ENCODE measurements at regions of chr19 and their contacts with region 1.

Region 1: DNA sequence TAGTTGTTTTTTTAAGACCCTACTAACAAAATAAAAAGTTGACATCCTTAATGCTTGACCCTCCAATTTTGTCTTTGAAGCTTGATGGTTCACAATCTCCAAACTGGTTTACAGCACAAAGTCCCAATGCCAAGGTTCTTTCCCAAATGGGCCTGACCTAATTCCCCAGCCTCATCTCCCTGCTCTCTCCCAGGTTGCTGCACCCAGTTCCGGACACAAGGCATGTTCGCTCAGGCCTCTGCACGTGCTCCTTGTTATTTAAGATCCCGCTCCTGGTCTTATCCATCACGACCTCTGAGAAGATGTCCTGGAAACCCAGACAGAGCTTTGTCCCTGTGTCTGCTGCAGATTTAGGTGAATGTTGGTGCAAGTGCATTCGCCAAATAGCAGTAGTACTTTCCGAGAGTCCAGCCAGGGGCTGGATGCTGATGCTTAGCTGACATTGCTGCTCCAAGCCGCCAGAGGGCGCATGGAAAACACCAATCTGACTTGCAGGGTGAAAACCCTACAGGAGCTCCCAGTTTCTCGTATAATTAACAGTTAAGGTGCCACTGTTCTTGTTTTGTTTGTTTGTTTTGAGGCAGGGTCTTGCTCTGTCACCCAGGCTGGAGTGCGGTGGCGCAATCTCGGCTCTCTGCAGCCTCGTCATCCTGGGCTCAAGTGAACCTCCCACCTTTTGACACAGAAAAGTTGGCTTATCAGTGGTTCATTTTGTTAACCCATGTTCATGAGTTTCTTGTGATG is 18.5 kb downstream of the LYPD3 start:
- DNase-seq: peak; percentile 61 to 78
- H3K4me3 ChIP-seq: no peak overlapping the region
- H3K4me1 ChIP-seq: peaks cover 2% of the 10 kb centered on the region; the same call in 1 of the 2 replicates
- H3K27me3 ChIP-seq: no peaks in the 10 kb centered on the region

Region 2: DNA sequence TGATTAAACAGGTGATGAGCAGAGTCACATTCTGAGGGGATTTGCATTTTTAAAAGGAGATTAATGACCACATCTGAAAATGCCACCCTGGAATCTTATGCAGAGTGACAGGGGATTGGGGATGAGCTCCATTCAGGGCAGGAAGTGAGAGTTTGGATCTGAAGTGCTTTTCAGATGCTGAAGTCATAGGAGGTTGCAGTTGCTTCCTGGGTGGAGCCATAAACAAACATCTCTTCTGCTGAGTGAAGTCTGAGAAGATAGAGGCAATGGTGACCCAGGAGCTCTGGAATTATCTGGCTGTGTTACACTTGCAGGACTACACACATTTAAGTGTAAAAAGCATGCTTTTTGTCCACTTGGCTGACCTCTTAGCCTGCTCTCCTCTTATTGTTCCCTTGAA is 630.0 kb before region 1 on chr19:
- in situ Hi-C with region 1: no loop called
- DNase-seq: no peak
- H3K4me3 ChIP-seq: no peak overlapping the region
- H3K4me1 ChIP-seq: no peaks in the 10 kb centered on the region
- H3K27me3 ChIP-seq: no peaks in the 10 kb centered on the region

Region 3: GRCh38 chr19:43229315-43229714 is 217.6 kb before region 1 on chr19:
- in situ Hi-C with region 1: loop called (anchors 25 kb)
- DNase-seq: peak; percentile 45 to 71
- H3K4me3 ChIP-seq: no peak overlapping the region
- H3K4me1 ChIP-seq: no peaks in the 10 kb centered on the region
- H3K27me3 ChIP-seq: no peaks in the 10 kb centered on the region

Region 4: DNA sequence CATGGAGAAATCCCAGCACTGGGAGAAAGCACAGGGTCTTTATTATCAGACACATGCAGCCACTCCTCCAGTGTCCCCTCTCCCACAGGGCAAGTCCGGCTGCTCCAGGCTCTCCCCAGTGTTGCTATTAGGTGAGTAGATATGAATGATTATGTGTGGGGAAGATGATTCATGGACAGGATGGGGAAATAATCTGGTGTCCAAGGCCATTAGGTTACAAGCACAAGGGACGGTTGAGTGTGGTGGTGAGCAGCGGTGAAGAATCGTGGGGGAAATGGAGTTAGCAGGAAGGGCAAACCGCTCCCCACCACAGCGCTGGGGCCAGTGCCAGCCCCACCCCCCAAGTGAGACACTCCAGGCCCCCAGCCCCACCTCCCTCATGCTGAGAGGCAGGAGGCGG is 74.5 kb before region 1 on chr19:
- in situ Hi-C with region 1: no loop called
- DNase-seq: no peak
- H3K4me3 ChIP-seq: no peak overlapping the region
- H3K4me1 ChIP-seq: no peaks in the 10 kb centered on the region
- H3K27me3 ChIP-seq: peaks cover 24% of the 10 kb centered on the region

Region 5: DNA sequence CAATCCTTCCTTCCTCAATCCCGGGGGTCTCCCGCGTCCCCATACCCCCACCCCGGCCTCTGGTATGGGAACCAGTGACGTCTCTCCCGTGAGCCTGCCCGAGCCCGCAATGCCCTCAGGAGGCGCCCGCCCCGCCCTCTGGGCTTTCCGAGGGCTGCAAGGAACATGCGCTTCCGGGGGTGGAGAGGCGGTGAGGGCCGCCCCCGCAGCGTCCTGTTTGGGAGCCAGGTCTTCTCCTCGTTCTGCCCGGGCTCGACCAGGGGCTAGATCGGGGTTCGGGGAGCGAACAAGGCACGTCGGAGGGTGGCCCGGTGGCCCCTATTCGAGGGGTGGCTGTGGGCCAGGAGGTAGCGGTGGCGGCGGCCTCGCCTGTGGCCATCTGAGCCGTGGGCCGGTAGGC is 38.9 kb before region 1 on chr19:
- in situ Hi-C with region 1: no loop called
- DNase-seq: no peak
- H3K4me3 ChIP-seq: no peak overlapping the region
- H3K4me1 ChIP-seq: no peaks in the 10 kb centered on the region
- H3K27me3 ChIP-seq: no peaks in the 10 kb centered on the region

Region 6: GRCh38 chr19:43519436-43520088 is 72.6 kb after region 1 on chr19:
- in situ Hi-C with region 1: loop called (anchors 5 kb)
- DNase-seq: peak; percentile 81 to 88
- H3K4me3 ChIP-seq: no peak overlapping the region
- H3K4me1 ChIP-seq: no peaks in the 10 kb centered on the region
- H3K27me3 ChIP-seq: no peaks in the 10 kb centered on the region

Region 7: GRCh38 chr19:43562698-43563241 is 115.9 kb after region 1 on chr19:
- in situ Hi-C with region 1: no loop called
- DNase-seq: no peak
- H3K4me3 ChIP-seq: no peak overlapping the region
- H3K4me1 ChIP-seq: no peaks in the 10 kb centered on the region
- H3K27me3 ChIP-seq: no peaks in the 10 kb centered on the region

Region 8: GRCh38 chr19:43651758-43652545 is 205.0 kb after region 1 on chr19:
- in situ Hi-C with region 1: loop called (anchors 10 kb)
- DNase-seq: peak; percentile 61 to 74
- H3K4me3 ChIP-seq: no peak overlapping the region
- H3K4me1 ChIP-seq: no peaks in the 10 kb centered on the region; the same call in 1 of the 2 replicates
- H3K27me3 ChIP-seq: no peaks in the 10 kb centered on the region

Measured in HAP-1 (cell line).